ENCODE measurements at regions of chr21 and their contacts with region 1.

Region 1: GRCh38 chr21:36156339-36156814 is 247 bp upstream of the DOP1B start:
- DNase-seq: peak; percentile 100
- ATAC-seq: peak; percentile 91
- H3K4me3 Mint-ChIP-seq: peak overlapping the region; percentile 85
- H3K27ac Mint-ChIP-seq: peak overlapping the region; percentile 77
- H3K4me1 Mint-ChIP-seq: peaks cover 32% of the 10 kb centered on the region
- H3K27me3 Mint-ChIP-seq: no peaks in the 10 kb centered on the region
- CTCF ChIP-seq: no peak

Region 2: GRCh38 chr21:36113647-36114428 is 42.5 kb before region 1 on chr21:
- CTCF ChIA-PET with region 1: no interaction called
- POLR2A ChIA-PET with region 1: no interaction called
- intact Hi-C with region 1: loop called (anchors 1 kb)
- DNase-seq: no peak
- ATAC-seq: no peak
- H3K4me3 Mint-ChIP-seq: peak overlapping the region; percentile 75
- H3K27ac Mint-ChIP-seq: peak overlapping the region; percentile 80
- H3K4me1 Mint-ChIP-seq: peaks cover 30% of the 10 kb centered on the region
- H3K27me3 Mint-ChIP-seq: no peaks in the 10 kb centered on the region
- CTCF ChIP-seq: no peak

Region 3: DNA sequence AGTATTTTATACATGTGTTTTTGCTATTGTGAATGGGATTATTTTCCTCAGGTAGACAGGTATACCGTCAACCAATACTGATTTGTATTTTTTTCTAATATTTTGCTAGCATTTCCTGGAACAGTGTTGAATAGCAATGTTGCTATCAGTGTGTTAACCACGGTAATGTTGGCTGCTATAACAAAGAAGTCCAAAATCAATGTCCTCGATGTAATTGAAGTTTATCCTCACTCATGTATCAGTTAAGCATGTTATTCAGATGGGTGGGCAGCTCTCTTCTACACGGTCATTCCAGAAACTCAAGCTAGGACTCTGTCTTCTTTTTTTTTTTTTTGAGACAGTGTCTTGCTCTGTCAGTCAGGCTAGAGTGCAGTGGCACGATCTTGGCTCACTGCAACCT is 24.6 kb after region 1 on chr21:
- CTCF ChIA-PET with region 1: no interaction called
- POLR2A ChIA-PET with region 1: no interaction called
- intact Hi-C with region 1: loop called (anchors 2 kb)
- DNase-seq: no peak
- ATAC-seq: no peak
- H3K4me3 Mint-ChIP-seq: no peak overlapping the region
- H3K27ac Mint-ChIP-seq: peak overlapping the region; percentile 72
- H3K4me1 Mint-ChIP-seq: peaks cover 29% of the 10 kb centered on the region
- H3K27me3 Mint-ChIP-seq: no peaks in the 10 kb centered on the region
- CTCF ChIP-seq: no peak

Region 4: GRCh38 chr21:36260030-36260787 is 103.8 kb after region 1 on chr21:
- CTCF ChIA-PET with region 1: no interaction called
- POLR2A ChIA-PET with region 1: interaction called, 4 read pairs
- intact Hi-C with region 1: loop called (anchors 1 kb)
- DNase-seq: no peak
- ATAC-seq: peak; percentile 48
- H3K4me3 Mint-ChIP-seq: peak overlapping the region; percentile 82
- H3K27ac Mint-ChIP-seq: peak overlapping the region; percentile 96
- H3K4me1 Mint-ChIP-seq: peaks cover 91% of the 10 kb centered on the region
- H3K27me3 Mint-ChIP-seq: no peaks in the 10 kb centered on the region
- CTCF ChIP-seq: no peak

Region 5: GRCh38 chr21:36330904-36331303 is 174.5 kb after region 1 on chr21:
- CTCF ChIA-PET with region 1: interaction called, 4 read pairs
- POLR2A ChIA-PET with region 1: interaction called, 4 read pairs
- intact Hi-C with region 1: loop called (anchors 1 kb)
- DNase-seq: no peak
- ATAC-seq: peak; percentile 91
- H3K4me3 Mint-ChIP-seq: no peak overlapping the region
- H3K27ac Mint-ChIP-seq: peak overlapping the region; percentile 79
- H3K4me1 Mint-ChIP-seq: peaks cover 36% of the 10 kb centered on the region
- H3K27me3 Mint-ChIP-seq: no peaks in the 10 kb centered on the region
- CTCF ChIP-seq: peak; percentile 67

Region 6: GRCh38 chr21:37267269-37268184 is 1111.2 kb after region 1 on chr21 and contains the start of gene VPS26C:
- CTCF ChIA-PET with region 1: no interaction called
- POLR2A ChIA-PET with region 1: no interaction called
- intact Hi-C with region 1: loop called (anchors 10 kb)
- DNase-seq: peak; percentile 94
- ATAC-seq: peak; percentile 86
- H3K4me3 Mint-ChIP-seq: peak within 1 kb of the TSS; percentile 96
- H3K27ac Mint-ChIP-seq: peak within 1 kb of the TSS; percentile 97
- H3K4me1 Mint-ChIP-seq: peaks cover 29% of the 10 kb centered on the region
- H3K27me3 Mint-ChIP-seq: peaks cover 6% of the 10 kb centered on the region
- CTCF ChIP-seq: no peak
- total RNA-seq, gene VPS26C: 42.5 and 45.2 TPM in 2 replicates